ENCODE measurements at regions of chr7 and their contacts with region 1.

Region 1: DNA sequence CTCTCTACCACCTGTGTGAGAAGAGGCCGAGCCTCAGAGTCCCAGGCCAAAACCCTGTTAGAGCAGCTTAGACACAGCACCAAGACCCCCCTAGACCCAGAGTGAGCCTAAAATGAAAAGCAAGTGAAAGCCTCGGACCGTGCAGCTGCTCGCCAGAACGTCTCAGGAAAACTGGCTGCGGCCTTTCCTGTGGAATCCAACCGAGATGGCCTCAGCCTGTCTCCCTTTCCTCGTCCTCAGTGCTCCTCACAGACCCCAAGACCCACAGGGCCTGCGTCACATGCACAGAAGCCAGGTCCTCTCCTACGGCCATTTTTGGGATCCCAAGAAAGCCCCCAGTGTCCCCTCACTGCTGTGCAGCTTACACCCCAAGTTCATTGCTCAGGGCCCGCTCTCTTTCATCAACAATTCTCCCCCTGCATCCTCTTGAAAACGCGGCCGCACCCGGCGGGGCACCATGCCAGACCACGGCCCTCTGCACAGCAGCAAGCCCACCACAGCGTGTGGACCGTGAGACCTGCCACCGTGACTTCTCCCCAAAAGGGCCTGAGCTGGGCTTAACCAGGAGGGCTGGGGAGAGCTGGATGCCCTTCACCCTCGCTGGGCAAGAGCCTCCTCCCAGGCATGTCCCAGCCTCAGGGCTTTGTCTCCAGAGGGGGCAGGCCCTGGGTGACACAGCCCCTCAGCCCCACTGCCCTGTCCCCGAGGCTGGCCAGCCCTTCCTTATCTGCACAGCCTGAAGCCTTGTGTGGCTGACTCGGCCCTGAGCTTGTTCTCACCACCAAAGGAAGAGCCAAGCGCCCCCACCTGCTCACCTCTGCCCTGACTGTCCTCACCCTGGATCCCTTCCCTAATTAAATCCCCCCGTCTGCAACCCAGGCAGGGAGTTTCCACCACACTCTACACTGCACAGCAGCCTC is 142.9 kb downstream of the PTPRN2 start:
- DNase-seq: no peak
- ATAC-seq: peak; percentile 30
- H3K4me3 Mint-ChIP-seq: no peak overlapping the region
- H3K27ac Mint-ChIP-seq: peak overlapping the region; percentile 73
- H3K4me1 Mint-ChIP-seq: peaks cover 9% of the 10 kb centered on the region
- H3K27me3 Mint-ChIP-seq: no peaks in the 10 kb centered on the region
- CTCF ChIP-seq: no peak

Region 2: DNA sequence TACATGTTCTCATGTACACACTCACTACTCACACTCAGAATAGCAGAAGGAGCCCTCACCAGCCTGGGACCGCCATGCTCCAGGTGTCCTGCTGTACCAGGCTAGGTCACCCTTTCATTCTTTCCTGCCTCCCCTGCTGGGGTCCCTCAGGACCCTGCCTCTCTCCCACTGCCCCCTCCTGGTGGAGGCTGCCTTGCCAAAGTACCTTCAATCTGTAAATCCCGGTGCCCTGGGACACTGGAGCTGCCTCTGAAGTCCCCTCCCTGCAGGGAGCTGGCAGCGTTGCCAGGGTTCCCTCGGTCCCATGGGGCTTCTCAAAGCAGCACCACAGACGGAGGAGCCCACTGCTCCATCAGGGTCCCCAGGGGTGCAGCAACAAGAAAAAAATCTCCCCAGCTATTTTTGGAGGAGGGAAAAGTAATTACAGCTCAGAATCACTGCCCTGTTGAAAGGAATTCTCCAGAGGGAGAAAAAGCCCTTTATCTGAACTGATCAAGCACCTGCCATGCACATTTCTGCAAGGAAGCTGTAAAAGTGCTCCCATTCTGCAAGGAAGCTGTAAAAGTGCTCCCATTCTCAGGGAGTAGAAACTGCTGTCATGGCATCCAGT is 117.1 kb before region 1 on chr7:
- CTCF ChIA-PET with region 1: no interaction called
- POLR2A ChIA-PET with region 1: no interaction called
- DNase-seq: no peak
- ATAC-seq: no peak
- H3K4me3 Mint-ChIP-seq: no peak overlapping the region
- H3K27ac Mint-ChIP-seq: peak overlapping the region; percentile 28; the same call in 1 of the 2 replicates
- H3K4me1 Mint-ChIP-seq: peaks cover 29% of the 10 kb centered on the region
- H3K27me3 Mint-ChIP-seq: peaks cover 6% of the 10 kb centered on the region
- CTCF ChIP-seq: no peak

Region 3: DNA sequence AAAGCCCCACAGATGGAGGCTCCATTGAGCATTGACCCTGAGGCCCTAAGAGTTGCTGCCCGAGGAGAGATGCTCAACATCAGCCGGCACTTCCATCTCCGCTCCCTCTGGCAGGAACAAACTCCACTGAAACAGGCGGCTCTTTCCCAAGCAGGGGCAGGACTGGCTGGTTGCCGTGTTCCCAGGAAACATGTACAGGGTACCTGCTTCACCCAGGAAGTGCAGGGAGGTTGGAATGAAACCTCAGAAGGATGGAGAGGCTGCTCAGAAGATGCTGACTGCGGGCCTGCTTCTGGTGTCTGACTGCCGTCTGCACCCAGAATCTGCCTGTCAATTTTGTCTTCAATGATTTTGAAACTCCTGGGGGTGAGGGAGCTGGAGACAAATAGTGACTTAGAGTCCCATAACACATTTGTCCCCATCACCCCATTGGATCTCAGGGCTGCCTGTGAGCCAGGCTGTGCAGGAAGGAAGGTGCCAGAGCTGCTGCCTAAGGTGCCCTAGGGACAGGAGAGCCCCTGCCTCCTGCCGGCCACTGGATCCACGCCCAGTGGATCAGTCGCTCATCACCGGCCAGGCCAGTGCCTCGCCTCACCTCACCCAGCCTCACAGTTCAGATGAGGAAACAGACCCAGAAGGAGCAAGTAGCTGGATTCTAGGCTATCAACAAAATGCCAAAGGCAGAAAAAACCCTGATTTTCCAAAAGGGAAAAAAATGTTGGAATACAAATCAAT is 94.4 kb before region 1 on chr7:
- CTCF ChIA-PET with region 1: no interaction called
- POLR2A ChIA-PET with region 1: no interaction called
- DNase-seq: no peak
- ATAC-seq: no peak
- H3K4me3 Mint-ChIP-seq: peak overlapping the region; percentile 72; the same call in 1 of the 2 replicates
- H3K27ac Mint-ChIP-seq: no peak overlapping the region
- H3K4me1 Mint-ChIP-seq: peaks cover 32% of the 10 kb centered on the region
- H3K27me3 Mint-ChIP-seq: peaks cover 51% of the 10 kb centered on the region
- CTCF ChIP-seq: no peak

Region 4: DNA sequence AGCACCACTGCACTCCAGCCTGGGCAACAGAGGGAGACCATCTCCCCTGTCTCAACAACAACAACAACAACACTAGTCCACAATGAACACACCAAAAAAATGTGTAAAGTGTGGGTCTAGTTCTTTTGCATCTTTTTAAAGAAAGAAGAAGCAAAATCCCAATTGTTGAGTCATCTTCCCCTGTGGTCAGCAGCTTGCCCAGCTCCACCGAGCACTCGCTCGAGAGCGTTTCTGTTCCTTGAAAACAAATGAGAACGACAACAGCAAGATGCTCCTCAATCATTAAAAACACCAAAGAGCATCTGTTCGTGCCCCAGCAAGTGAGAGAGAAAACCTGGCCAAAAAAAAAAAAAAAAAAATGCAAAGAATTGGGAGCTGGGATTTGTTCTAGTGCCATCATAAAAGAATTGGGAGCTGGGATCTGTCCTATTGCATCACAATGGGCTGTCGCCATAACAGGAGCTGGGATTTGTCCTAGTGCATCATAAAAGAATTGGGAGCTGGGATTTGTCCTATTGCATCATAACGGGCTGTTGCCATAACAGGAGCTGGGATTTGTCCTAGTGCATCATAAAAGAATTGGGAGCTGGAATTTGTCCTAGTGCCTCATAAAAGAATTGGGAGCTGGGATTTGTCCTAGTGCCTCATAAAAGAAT is 24.8 kb after region 1 on chr7:
- CTCF ChIA-PET with region 1: interaction called, 17 read pairs
- POLR2A ChIA-PET with region 1: no interaction called
- DNase-seq: no peak
- ATAC-seq: no peak
- H3K4me3 Mint-ChIP-seq: no peak overlapping the region
- H3K27ac Mint-ChIP-seq: peak overlapping the region; percentile 83; the same call in 1 of the 2 replicates
- H3K4me1 Mint-ChIP-seq: peaks cover 61% of the 10 kb centered on the region
- H3K27me3 Mint-ChIP-seq: no peaks in the 10 kb centered on the region
- CTCF ChIP-seq: no peak

Region 5: DNA sequence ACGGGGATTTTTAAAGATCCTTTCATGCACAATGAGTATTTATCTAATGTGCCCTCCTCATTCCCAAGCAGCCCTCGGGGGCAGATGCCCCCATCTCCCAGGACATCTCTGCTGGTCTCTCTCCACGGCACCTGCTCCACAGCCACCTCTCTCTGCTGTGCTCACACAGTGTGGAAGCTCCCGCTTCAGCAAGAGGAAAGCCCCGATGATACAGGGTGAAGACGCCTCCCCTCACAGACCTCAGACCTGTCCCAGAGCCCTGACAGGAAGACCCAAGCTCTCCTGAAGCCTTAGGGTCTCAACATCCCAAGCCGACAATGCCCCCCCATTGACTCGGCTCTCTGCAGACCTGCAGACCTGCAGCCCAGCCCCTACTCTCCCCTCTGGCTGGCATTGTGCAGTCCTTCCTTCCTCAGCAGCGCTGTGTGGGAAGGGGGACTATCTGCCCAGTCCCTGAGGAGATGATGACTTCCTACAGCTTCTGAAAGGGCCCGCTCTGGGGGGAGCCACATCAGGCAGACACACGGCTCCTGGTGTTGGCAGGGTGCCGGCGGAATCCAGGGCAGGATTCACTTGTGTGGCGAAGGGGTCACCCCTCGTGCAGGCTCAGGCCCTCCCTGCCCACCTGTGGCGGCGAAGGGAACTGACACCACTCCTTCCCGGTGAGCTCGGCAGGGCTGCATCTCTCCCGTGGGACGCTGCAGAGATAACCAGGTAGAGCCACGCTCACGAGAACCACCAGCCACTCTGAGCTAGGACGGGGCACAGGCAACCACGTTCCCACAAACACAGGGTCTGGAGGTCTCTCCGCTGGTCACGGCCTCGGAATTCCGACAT is 81.1 kb after region 1 on chr7:
- CTCF ChIA-PET with region 1: interaction called, 10 read pairs
- POLR2A ChIA-PET with region 1: no interaction called
- DNase-seq: peak; percentile 30
- ATAC-seq: peak; percentile 64
- H3K4me3 Mint-ChIP-seq: no peak overlapping the region
- H3K27ac Mint-ChIP-seq: no peak overlapping the region
- H3K4me1 Mint-ChIP-seq: peaks cover 3% of the 10 kb centered on the region
- H3K27me3 Mint-ChIP-seq: peaks cover 3% of the 10 kb centered on the region
- CTCF ChIP-seq: no peak

Region 6: DNA sequence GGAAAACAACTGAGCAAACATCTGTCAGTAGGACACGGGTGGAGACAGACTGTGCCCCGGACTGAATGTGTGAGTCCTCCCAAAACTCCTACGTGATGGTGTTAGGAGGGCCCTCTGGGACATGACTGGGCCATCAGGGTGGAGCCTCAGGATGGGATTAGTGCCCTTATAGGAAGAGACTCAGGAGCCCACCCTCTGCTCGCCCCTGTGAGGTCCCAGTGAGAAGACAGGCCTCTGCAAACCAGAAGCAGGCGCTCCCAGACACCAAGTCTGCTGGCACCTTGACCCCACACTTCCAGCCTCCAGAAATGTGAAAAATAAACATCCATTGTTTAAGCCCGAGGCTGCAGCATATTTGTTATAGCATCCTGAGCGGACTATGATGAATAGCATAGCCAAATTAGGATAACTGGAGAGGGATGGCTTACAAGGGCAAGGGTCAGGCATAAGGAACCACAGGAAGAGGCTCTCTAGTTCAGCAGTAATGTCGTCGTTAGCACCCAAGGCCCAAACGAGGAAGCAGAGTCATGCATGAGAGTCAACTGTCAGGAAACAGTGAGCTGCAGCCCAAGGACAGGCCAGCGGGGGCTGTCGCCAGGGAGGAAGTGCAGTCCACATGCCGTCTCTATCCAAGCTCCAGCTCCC is 92.2 kb after region 1 on chr7:
- CTCF ChIA-PET with region 1: no interaction called
- POLR2A ChIA-PET with region 1: no interaction called
- DNase-seq: no peak
- ATAC-seq: peak; percentile 61; the same call in 1 of the 2 replicates
- H3K4me3 Mint-ChIP-seq: no peak overlapping the region
- H3K27ac Mint-ChIP-seq: no peak overlapping the region
- H3K4me1 Mint-ChIP-seq: peaks cover 18% of the 10 kb centered on the region
- H3K27me3 Mint-ChIP-seq: no peaks in the 10 kb centered on the region; the same call in 1 of the 2 replicates
- CTCF ChIP-seq: no peak

Measured in WTC11 (cell line).